ENCODE measurements at regions of chr18 and their contacts with region 1.

Region 1: GRCh38 chr18:57434536-57435494 is at the start of gene ONECUT2:
- DNase-seq: peak; percentile 68 to 92
- H3K4me3 ChIP-seq: peak within 1 kb of the TSS; percentile 50 to 59
- H3K27ac ChIP-seq: no peak within 1 kb of the TSS
- H3K4me1 ChIP-seq: peaks cover 3 to 20% of the 10 kb centered on the region in 2 donors
- H3K27me3 ChIP-seq: peaks cover 41% of the 10 kb centered on the region
- CTCF ChIP-seq: no peak
- total RNA-seq, gene ONECUT2: 0.11 TPM

Region 2: DNA sequence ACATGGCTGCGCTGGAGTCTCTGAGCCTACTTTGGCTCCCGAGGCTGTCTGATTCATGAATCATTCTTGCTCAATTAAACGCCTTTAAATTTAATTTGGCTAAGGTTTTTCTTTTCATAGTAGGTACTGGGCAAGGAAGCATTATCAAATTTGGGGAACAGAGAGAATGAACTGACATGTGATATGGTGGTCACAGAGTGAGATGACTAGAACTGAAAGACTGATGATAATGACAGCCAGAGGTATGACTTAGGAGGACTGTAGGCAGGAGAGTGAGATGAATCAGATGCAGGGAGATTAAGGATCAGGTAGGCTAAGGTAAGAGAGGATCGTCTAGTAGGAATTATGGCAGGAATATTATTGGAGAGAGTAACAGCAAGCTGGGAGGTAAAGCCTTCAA is 123.3 kb before region 1 on chr18:
- intact Hi-C with region 1: no loop called
- DNase-seq: no peak
- H3K4me3 ChIP-seq: no peak overlapping the region
- H3K27ac ChIP-seq: no peak overlapping the region
- H3K4me1 ChIP-seq: no peaks in the 10 kb centered on the region
- H3K27me3 ChIP-seq: no peaks in the 10 kb centered on the region
- CTCF ChIP-seq: no peak

Region 3: GRCh38 chr18:57687970-57688369 is 253.2 kb after region 1 on chr18:
- intact Hi-C with region 1: no loop called
- DNase-seq: no peak
- H3K4me3 ChIP-seq: no peak overlapping the region
- H3K27ac ChIP-seq: no peak overlapping the region
- H3K4me1 ChIP-seq: no peaks in the 10 kb centered on the region
- H3K27me3 ChIP-seq: no peaks in the 10 kb centered on the region
- CTCF ChIP-seq: no peak

Region 4: DNA sequence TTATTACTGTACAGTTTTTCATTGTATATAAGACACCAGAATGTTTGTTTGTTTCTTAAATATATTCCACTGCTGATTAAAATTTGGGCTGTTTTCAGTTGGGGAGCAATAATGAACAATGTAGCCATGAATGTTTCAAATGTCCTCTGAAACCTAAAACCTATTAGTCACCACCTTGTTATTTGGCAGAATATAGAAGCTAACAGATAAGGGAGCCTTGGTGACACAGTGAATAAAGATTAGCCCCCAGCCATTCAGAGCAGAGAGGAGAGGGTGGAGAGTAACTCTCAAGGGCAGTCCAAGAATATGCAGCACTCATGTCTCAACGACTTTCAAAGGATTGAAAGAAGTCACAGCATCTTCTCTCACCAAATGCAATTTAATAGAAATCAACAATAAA is 411.4 kb after region 1 on chr18:
- intact Hi-C with region 1: loop called (anchors 10 kb)
- DNase-seq: no peak
- H3K4me3 ChIP-seq: no peak overlapping the region
- H3K27ac ChIP-seq: no peak overlapping the region
- H3K4me1 ChIP-seq: no peaks in the 10 kb centered on the region
- H3K27me3 ChIP-seq: no peaks in the 10 kb centered on the region
- CTCF ChIP-seq: no peak

Measured in ascending aorta (tissue), 2 donors.